ENCODE measurements at regions of chr4 and their contacts with region 1.

Region 1: GRCh38 chr4:165384598-165384997 is 5.8 kb downstream of the CPE start:
- DNase-seq: no peak
- ATAC-seq: peak; percentile 60
- H3K4me3 Mint-ChIP-seq: no peak overlapping the region
- H3K27ac Mint-ChIP-seq: no peak overlapping the region
- H3K4me1 Mint-ChIP-seq: peaks cover 32% of the 10 kb centered on the region
- H3K27me3 Mint-ChIP-seq: peaks cover 10% of the 10 kb centered on the region
- CTCF ChIP-seq: no peak

Region 2: DNA sequence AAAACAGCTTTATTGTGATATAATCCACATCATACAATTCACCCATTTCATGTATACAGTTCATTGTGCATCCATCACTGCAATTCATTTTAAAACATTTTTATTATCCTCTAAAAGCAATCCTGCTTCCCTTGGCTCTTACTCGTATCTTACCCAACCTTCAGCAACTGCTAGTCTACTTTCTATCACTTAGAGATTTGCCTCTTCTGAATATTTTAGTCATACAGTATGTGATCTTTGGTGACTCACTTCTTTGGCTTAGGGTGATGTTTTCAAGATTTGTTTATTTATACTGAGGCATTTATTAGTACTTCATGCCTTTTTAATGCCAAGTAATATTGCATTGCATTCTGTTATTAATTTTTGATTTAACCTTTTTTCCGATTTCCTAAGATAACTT is 72.1 kb before region 1 on chr4:
- CTCF ChIA-PET with region 1: no interaction called
- POLR2A ChIA-PET with region 1: no interaction called
- DNase-seq: no peak
- ATAC-seq: no peak
- H3K4me3 Mint-ChIP-seq: no peak overlapping the region
- H3K27ac Mint-ChIP-seq: no peak overlapping the region
- H3K4me1 Mint-ChIP-seq: no peaks in the 10 kb centered on the region
- H3K27me3 Mint-ChIP-seq: no peaks in the 10 kb centered on the region; the same call in 1 of the 2 replicates
- CTCF ChIP-seq: no peak

Region 3: GRCh38 chr4:165355900-165356300 is 28.7 kb before region 1 on chr4:
- CTCF ChIA-PET with region 1: interaction called, 10 read pairs
- POLR2A ChIA-PET with region 1: no interaction called
- DNase-seq: peak; percentile 63
- ATAC-seq: peak; percentile 87
- H3K4me3 Mint-ChIP-seq: no peak overlapping the region
- H3K27ac Mint-ChIP-seq: no peak overlapping the region
- H3K4me1 Mint-ChIP-seq: 0 out of 2 replicates have a peak, but pooled peaks cover 2% of the 10 kb centered on the region
- H3K27me3 Mint-ChIP-seq: no peaks in the 10 kb centered on the region
- CTCF ChIP-seq: no peak

Region 4: GRCh38 chr4:165433529-165433928 is 48.9 kb after region 1 on chr4:
- CTCF ChIA-PET with region 1: interaction called, 11 read pairs
- POLR2A ChIA-PET with region 1: no interaction called
- DNase-seq: no peak
- ATAC-seq: peak; percentile 90
- H3K4me3 Mint-ChIP-seq: no peak overlapping the region
- H3K27ac Mint-ChIP-seq: peak overlapping the region; percentile 60
- H3K4me1 Mint-ChIP-seq: peaks cover 22% of the 10 kb centered on the region
- H3K27me3 Mint-ChIP-seq: no peaks in the 10 kb centered on the region
- CTCF ChIP-seq: no peak

Measured in WTC11 (cell line).